ENCODE measurements at regions of chr18 and their contacts with region 1.

Region 1: DNA sequence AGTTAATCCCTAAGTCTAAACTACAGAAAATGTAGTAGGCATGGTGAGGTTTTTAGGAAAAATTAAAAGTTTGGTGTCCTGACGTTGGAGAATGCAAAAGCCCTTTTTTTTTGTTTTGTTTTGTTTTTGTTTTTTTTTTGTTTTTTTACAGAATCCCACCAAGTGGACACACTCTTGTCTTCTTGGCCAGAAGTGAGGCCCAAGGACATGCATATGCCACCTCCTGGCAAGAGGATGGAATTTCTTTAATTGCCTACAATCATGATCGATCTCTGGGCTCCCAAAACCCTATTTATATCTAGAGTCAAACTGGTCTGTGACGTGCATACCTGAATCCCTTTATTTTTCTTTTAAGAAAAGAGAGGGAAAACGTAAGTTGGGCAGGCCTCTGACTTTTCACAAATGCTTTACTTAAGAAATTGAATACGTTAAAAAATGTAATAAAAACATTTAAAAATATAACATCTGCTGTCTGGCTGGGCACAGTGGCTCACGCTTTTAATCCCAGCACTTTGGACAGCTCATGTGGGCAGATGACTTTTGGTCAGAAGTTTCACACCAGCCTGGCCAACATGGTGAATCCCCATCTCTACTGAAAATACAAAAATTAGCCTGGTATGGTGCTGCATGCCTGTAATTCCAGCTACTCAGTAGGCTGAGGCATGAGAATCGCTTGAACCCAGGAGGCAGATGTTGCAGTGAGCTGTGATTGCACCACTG is 502.7 kb downstream of the CBLN2 start:
- DNase-seq: no peak
- H3K4me3 ChIP-seq: no peak overlapping the region
- H3K27ac ChIP-seq: no peak overlapping the region
- H3K4me1 ChIP-seq: no peaks in the 10 kb centered on the region
- H3K27me3 ChIP-seq: no peaks in the 10 kb centered on the region
- CTCF ChIP-seq: no peak
- EP300 ChIP-seq: no peak
- POLR2A ChIP-seq: no peak

Region 2: GRCh38 chr18:71826789-71827188 is 214.7 kb before region 1 on chr18:
- in situ Hi-C with region 1: no loop called
- intact Hi-C with region 1: no loop called
- DNase-seq: no peak
- H3K4me3 ChIP-seq: no peak overlapping the region
- H3K27ac ChIP-seq: no peak overlapping the region
- H3K4me1 ChIP-seq: peaks cover 0 to 2% (median 0%) of the 10 kb centered on the region in 4 donors
- H3K27me3 ChIP-seq: no peaks in the 10 kb centered on the region
- CTCF ChIP-seq: no peak
- EP300 ChIP-seq: no peak
- POLR2A ChIP-seq: no peak

Region 3: DNA sequence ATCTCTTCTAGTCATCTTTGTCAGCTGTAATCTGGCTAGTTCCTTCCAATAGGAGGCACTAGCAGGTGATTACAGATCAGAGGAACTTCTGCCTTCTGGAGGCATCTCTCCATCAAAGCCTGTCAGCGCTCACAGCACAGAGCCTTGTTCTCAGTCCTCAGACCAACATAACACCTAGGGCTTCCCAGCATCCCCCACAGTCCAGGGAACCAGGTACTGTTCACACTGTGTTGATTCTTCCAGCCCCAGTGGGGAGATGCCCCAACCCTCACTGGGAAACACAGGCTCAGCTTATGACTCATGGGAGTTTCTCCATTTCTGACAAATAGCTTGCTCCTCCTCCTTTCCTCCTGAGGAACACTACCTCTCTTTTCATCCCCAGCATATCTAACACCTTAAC is 99.0 kb before region 1 on chr18:
- in situ Hi-C with region 1: loop called in 1 of 4 experiments (anchors 25 kb)
- intact Hi-C with region 1: no loop called
- DNase-seq: no peak
- H3K4me3 ChIP-seq: no peak overlapping the region
- H3K27ac ChIP-seq: no peak overlapping the region
- H3K4me1 ChIP-seq: no peaks in the 10 kb centered on the region
- H3K27me3 ChIP-seq: no peaks in the 10 kb centered on the region
- CTCF ChIP-seq: no peak
- EP300 ChIP-seq: no peak
- POLR2A ChIP-seq: no peak